Mammary epithelial cell (primary cell): ENCODE measurements at regions of chr15 and their contacts with region 1.

Region 1: DNA sequence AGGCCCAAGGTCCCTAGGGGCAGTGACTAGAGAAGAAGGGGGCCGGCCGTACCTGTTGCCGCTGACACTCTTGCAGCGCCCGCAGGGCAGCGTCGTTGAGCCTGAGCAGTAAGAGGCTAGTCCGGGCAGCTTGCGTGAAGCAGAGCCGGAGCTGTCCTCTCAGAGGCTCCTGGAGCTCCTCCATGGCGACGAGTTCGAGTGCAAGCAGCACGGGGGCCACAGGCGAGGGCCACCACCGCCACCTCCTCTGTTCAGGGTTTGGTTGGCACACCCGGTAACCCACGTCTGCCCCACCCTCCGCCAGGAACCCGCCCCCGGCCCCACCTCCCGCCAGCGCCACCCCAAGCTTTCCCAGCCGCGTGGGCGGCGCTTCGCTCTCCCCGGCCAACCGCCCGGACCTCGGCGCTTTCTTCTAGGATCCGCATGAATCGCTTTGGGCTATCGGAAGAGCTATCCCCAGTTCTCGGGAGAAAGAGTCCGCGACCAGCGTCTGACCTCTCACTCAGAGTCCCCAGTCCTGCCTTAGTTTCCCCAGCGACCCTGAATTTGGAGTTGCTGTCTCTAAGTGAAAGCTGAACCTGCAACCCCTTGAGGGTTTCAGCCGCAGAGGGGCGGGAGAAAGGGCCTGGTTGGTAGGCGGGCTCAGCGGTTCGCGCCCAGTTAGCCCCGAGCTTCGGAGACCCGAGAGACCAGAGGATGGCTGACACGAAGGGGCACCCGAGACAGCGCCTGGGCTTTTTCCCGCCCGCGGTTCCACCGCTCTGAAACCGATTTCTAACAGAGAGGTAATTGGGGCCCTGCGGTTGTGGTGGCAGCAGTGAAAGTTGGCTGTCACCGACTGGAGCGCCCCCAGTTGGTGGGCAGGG is at the start of gene ELL3:
- DNase-seq: peak; percentile 81
- H3K4me3 ChIP-seq: peak within 1 kb of the TSS; percentile 64 to 83 (median 67)
- H3K27ac ChIP-seq: peak within 1 kb of the TSS; percentile 84
- H3K4me1 ChIP-seq: peaks cover 17% of the 10 kb centered on the region
- H3K27me3 ChIP-seq: no peaks in the 10 kb centered on the region
- CTCF ChIP-seq: peak; percentile 61 to 81
- total RNA-seq, gene ELL3: 1.7 to 5.7 TPM

Region 2: DNA sequence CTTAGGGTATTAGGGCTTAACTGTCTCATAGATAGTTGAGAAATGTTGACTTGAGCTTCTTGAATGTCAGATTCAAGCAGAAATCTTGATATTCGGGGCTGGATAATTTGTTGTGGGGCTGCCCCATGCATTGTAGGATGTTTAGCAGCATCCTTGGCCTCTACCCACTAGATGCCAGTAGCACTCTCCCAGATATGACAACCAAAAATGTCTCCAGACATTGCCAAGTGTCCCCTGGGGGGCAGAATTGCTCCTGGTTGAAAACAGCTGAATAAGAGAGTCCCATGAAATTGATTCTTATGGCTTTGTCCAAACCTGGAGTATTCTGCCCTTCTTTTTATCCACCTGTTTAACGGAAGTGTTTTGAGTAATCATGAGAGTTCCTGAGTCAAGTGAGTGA is 430.6 kb before region 1 on chr15:
- CTCF ChIA-PET with region 1: no interaction called
- dilution Hi-C with region 1: no loop called
- in situ Hi-C with region 1: no loop called
- intact Hi-C with region 1: no loop called
- DNase-seq: no peak
- H3K4me3 ChIP-seq: no peak overlapping the region
- H3K27ac ChIP-seq: no peak overlapping the region
- H3K4me1 ChIP-seq: no peaks in the 10 kb centered on the region
- H3K27me3 ChIP-seq: no peaks in the 10 kb centered on the region
- CTCF ChIP-seq: no peak

Region 3: GRCh38 chr15:43440721-43441281 is 336.1 kb before region 1 on chr15:
- CTCF ChIA-PET with region 1: interaction called, 5 read pairs
- dilution Hi-C with region 1: no loop called
- in situ Hi-C with region 1: no loop called
- intact Hi-C with region 1: loop called (anchors 1 kb)
- DNase-seq: peak; percentile 95
- H3K4me3 ChIP-seq: no peak overlapping the region
- H3K27ac ChIP-seq: peak overlapping the region; percentile 61
- H3K4me1 ChIP-seq: peaks cover 7% of the 10 kb centered on the region
- H3K27me3 ChIP-seq: no peaks in the 10 kb centered on the region
- CTCF ChIP-seq: peak; percentile 62 to 75

Region 4: DNA sequence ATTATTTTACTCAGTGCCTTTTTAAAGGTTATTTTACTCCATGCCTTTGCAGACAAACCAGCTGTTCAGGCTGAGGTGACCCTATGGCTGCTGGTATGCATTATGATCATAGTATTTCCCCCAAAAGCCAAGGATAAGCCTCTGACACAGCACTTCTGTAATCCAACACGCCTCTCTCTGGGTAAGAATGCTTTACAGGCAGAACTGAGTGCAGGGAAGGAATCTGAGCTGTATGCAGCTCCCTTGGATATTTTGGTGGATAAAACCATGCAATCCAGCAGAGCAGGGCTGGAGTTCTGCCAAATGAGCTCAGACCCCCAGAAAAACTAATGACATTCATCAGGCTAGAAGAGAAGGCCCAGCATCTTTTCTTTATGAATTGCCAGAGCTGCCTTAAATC is 271.2 kb before region 1 on chr15:
- CTCF ChIA-PET with region 1: no interaction called
- dilution Hi-C with region 1: no loop called
- in situ Hi-C with region 1: no loop called
- intact Hi-C with region 1: no loop called
- DNase-seq: no peak
- H3K4me3 ChIP-seq: no peak overlapping the region
- H3K27ac ChIP-seq: no peak overlapping the region
- H3K4me1 ChIP-seq: peaks cover 2% of the 10 kb centered on the region
- H3K27me3 ChIP-seq: no peaks in the 10 kb centered on the region
- CTCF ChIP-seq: no peak

Region 5: GRCh38 chr15:43791993-43792760 is 15.2 kb after region 1 on chr15 and contains the start of gene SERF2:
- CTCF ChIA-PET with region 1: interaction called, 8 read pairs
- dilution Hi-C with region 1: no loop called
- in situ Hi-C with region 1: no loop called
- intact Hi-C with region 1: loop called (anchors 2 kb)
- DNase-seq: peak; percentile 99
- H3K4me3 ChIP-seq: peak within 1 kb of the TSS; percentile 88 to 100 (median 88)
- H3K27ac ChIP-seq: peak within 1 kb of the TSS; percentile 93
- H3K4me1 ChIP-seq: peaks cover 6% of the 10 kb centered on the region
- H3K27me3 ChIP-seq: no peaks in the 10 kb centered on the region
- CTCF ChIP-seq: no peak
- total RNA-seq, gene SERF2: 191 to 636 TPM

Region 6: GRCh38 chr15:44641651-44642050 is 864.7 kb after region 1 on chr15:
- CTCF ChIA-PET with region 1: interaction called, 17 read pairs
- dilution Hi-C with region 1: no loop called
- in situ Hi-C with region 1: no loop called
- intact Hi-C with region 1: no loop called
- DNase-seq: no peak
- H3K4me3 ChIP-seq: no peak overlapping the region
- H3K27ac ChIP-seq: no peak overlapping the region
- H3K4me1 ChIP-seq: peaks cover 4% of the 10 kb centered on the region
- H3K27me3 ChIP-seq: no peaks in the 10 kb centered on the region
- CTCF ChIP-seq: no peak